ENCODE measurements at regions of chr13 and their contacts with region 1.

Region 1: GRCh38 chr13:99656092-99656745 is 154.9 kb downstream of the TM9SF2 start:
- DNase-seq: peak; percentile 67
- H3K4me3 ChIP-seq: no peak overlapping the region
- H3K27ac ChIP-seq: no peak overlapping the region
- H3K4me1 ChIP-seq: peaks cover 28% of the 10 kb centered on the region
- H3K27me3 ChIP-seq: no peaks in the 10 kb centered on the region
- CTCF ChIP-seq: peak; percentile 92

Region 2: GRCh38 chr13:99916366-99917103 is 260.3 kb after region 1 on chr13:
- intact Hi-C with region 1: loop called (anchors 10 kb)
- DNase-seq: no peak
- H3K4me3 ChIP-seq: no peak overlapping the region
- H3K27ac ChIP-seq: no peak overlapping the region
- H3K4me1 ChIP-seq: no peaks in the 10 kb centered on the region
- H3K27me3 ChIP-seq: peaks cover 74% of the 10 kb centered on the region
- CTCF ChIP-seq: peak; percentile 88

Region 3: GRCh38 chr13:100235311-100235901 is 579.2 kb after region 1 on chr13:
- intact Hi-C with region 1: loop called (anchors 5 kb)
- DNase-seq: no peak
- H3K4me3 ChIP-seq: no peak overlapping the region
- H3K27ac ChIP-seq: no peak overlapping the region
- H3K4me1 ChIP-seq: peaks cover 30% of the 10 kb centered on the region
- H3K27me3 ChIP-seq: no peaks in the 10 kb centered on the region
- CTCF ChIP-seq: peak; percentile 68

Region 4: DNA sequence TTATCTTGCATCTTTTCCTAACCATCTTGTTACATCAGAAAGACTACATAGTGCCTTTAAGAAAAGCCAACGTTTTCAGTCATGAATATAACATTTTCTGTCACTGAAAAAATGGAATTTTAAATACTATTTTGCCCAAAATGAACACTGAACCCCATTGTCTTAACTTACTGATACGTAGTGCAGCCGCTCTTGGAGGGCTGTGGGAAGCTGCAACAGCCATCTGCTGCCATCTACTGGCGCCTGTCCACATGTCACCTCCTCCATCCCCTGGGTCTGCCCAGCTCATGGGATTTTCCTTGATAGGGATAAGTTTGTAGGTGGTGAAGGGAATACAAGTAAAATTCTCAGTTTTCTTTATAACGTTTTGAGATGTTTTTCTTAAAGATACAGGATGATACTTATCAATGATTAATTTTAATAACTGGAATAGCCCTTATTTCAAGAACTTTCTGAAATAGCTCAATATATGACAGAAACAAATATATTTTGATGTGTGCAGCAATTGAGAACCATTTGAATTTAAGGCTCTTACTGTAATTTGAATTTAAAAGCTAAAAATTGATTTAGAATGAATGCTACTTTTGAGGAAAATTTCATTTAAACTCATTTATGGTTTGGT is 858.7 kb after region 1 on chr13:
- intact Hi-C with region 1: loop called (anchors 2 kb)
- DNase-seq: peak; percentile 76
- H3K4me3 ChIP-seq: no peak overlapping the region
- H3K27ac ChIP-seq: peak overlapping the region; percentile 25
- H3K4me1 ChIP-seq: peaks cover 27% of the 10 kb centered on the region
- H3K27me3 ChIP-seq: no peaks in the 10 kb centered on the region
- CTCF ChIP-seq: peak; percentile 98